ENCODE measurements at regions of chr3 and their contacts with region 1.

Region 1: GRCh38 chr3:87581240-87581877 is 305.0 kb upstream of the POU1F1 start:
- DNase-seq: no peak
- H3K4me3 Mint-ChIP-seq: no peak overlapping the region
- H3K27ac Mint-ChIP-seq: no peak overlapping the region
- H3K4me1 Mint-ChIP-seq: no peaks in the 10 kb centered on the region
- H3K27me3 Mint-ChIP-seq: no peaks in the 10 kb centered on the region
- CTCF ChIP-seq: no peak

Region 2: DNA sequence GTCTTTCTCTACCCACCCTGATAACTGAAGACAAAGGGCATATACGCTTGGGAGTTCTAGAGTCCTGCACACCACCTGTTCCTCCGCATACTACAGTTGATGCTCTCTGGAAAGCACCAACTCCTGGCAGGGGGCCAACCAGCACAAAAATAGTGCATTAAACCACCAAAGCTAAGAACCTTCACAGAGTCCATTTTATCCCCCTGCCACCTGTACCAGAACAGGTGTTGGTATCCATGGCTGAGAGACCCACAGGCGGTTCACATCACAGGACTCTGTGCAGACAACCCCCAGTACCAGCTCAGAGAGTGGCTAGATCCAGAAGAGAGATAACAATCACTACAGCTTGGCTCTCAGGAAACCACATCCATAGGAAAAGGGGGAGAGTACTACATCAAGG is 190.5 kb before region 1 on chr3:
- CTCF ChIA-PET with region 1: no interaction called
- POLR2A ChIA-PET with region 1: no interaction called
- intact Hi-C with region 1: no loop called
- DNase-seq: no peak
- H3K4me3 Mint-ChIP-seq: no peak overlapping the region
- H3K27ac Mint-ChIP-seq: no peak overlapping the region
- H3K4me1 Mint-ChIP-seq: no peaks in the 10 kb centered on the region
- H3K27me3 Mint-ChIP-seq: no peaks in the 10 kb centered on the region
- CTCF ChIP-seq: no peak

Region 3: GRCh38 chr3:87949879-87950208 is 368.5 kb after region 1 on chr3:
- CTCF ChIA-PET with region 1: interaction called, 3 read pairs
- POLR2A ChIA-PET with region 1: no interaction called
- intact Hi-C with region 1: loop called (anchors 10 kb)
- DNase-seq: no peak
- H3K4me3 Mint-ChIP-seq: no peak overlapping the region
- H3K27ac Mint-ChIP-seq: no peak overlapping the region
- H3K4me1 Mint-ChIP-seq: no peaks in the 10 kb centered on the region
- H3K27me3 Mint-ChIP-seq: no peaks in the 10 kb centered on the region
- CTCF ChIP-seq: no peak

Measured in MCF 10A (cell line).